ENCODE measurements at regions of chr16 and their contacts with region 1.

Region 1: GRCh38 chr16:88856828-88857733 is at the starts of genes GALNS and TRAPPC2L:
- ATAC-seq: peak; percentile 72 to 93 (median 88)
- H3K4me3 ChIP-seq: peak within 1 kb of the TSS; percentile 61 to 79 (median 74)
- H3K27ac ChIP-seq: peak within 1 kb of the TSS in 1 of 2 donors; percentile 73
- H3K4me1 ChIP-seq: peaks cover 11 to 29% of the 10 kb centered on the region in 2 donors
- total RNA-seq, gene GALNS: 4.9 to 45.6 (median 17.4) TPM
- total RNA-seq, gene TRAPPC2L: 31.5 to 93.6 (median 52.3) TPM

Region 2: DNA sequence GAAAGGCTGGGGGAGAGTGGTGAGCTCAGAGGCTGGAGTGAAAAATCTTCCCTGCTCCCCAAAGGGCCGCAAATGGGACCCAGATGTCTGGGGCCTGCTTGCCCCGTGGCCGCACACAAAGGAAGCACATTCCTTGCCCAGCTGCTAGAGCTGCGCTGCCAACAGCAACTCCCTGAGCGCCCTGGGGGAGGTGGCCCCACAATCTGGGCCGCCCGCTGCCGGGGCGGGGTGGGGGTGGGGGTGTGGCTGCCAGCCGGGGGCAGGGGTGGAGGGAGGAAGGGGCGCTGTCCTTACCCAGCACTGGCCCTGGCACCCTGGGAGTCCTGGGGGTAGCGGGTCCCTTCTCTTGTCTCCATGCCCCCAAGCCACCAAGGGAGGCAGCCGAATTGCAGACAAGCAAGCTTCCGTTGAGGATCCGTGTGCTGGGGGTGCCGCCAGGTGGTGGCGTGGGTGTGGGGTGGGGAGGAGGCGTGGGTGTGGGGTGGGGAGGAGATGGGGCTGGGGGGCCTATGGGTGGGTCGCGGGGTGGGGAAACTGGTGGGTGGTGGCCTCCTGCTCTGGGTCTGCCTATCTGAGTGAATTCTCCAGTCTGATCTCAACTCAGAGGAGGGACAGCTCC is 57.8 kb after region 1 on chr16:
- in situ Hi-C with region 1: loop called in 1 of 9 experiments (anchors 10 kb)
- ATAC-seq: peak; percentile 6 to 92 (median 52)
- H3K4me3 ChIP-seq: no peak overlapping the region
- H3K27ac ChIP-seq: no peak overlapping the region
- H3K4me1 ChIP-seq: peaks cover 0 to 24% of the 10 kb centered on the region in 2 donors

Measured in motor neuron (in vitro differentiated cells).